ENCODE measurements at regions of chr9 and their contacts with region 1.

Region 1: DNA sequence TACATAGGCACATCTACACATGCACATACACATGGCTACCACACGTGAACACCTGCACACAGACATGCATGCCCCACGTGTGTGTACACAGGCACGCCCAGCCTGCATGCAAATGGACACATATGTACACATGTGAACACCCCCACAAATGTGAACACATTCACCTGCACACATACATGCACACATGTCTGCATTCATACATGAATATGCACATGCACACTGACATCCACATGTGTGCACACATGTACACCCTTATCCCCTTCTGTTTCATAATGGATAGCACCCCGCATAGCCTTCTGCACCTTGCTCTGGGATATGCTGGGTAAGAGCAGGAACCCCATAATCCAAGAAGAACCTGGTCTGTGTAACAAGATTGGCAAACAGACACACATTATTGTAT is 66.2 kb downstream of the WNK2 start:
- DNase-seq: no peak
- H3K4me3 Mint-ChIP-seq: no peak overlapping the region
- H3K27ac Mint-ChIP-seq: no peak overlapping the region
- H3K4me1 Mint-ChIP-seq: no peaks in the 10 kb centered on the region
- H3K27me3 Mint-ChIP-seq: no peaks in the 10 kb centered on the region

Region 2: GRCh38 chr9:93154315-93154903 is 95.8 kb before region 1 on chr9:
- CTCF ChIA-PET with region 1: no interaction called
- POLR2A ChIA-PET with region 1: no interaction called
- DNase-seq: peak; percentile 50
- H3K4me3 Mint-ChIP-seq: no peak overlapping the region
- H3K27ac Mint-ChIP-seq: no peak overlapping the region
- H3K4me1 Mint-ChIP-seq: peaks cover 29% of the 10 kb centered on the region
- H3K27me3 Mint-ChIP-seq: no peaks in the 10 kb centered on the region

Region 3: GRCh38 chr9:94212121-94212930 is 962.1 kb after region 1 on chr9:
- CTCF ChIA-PET with region 1: no interaction called
- POLR2A ChIA-PET with region 1: interaction called, 10 read pairs
- DNase-seq: no peak
- H3K4me3 Mint-ChIP-seq: no peak overlapping the region
- H3K27ac Mint-ChIP-seq: no peak overlapping the region
- H3K4me1 Mint-ChIP-seq: peaks cover 5% of the 10 kb centered on the region
- H3K27me3 Mint-ChIP-seq: peaks cover 1% of the 10 kb centered on the region